Mucosa of descending colon (tissue), 3 donors: ENCODE measurements at regions of chr19 and their contacts with region 1.

Region 1: DNA sequence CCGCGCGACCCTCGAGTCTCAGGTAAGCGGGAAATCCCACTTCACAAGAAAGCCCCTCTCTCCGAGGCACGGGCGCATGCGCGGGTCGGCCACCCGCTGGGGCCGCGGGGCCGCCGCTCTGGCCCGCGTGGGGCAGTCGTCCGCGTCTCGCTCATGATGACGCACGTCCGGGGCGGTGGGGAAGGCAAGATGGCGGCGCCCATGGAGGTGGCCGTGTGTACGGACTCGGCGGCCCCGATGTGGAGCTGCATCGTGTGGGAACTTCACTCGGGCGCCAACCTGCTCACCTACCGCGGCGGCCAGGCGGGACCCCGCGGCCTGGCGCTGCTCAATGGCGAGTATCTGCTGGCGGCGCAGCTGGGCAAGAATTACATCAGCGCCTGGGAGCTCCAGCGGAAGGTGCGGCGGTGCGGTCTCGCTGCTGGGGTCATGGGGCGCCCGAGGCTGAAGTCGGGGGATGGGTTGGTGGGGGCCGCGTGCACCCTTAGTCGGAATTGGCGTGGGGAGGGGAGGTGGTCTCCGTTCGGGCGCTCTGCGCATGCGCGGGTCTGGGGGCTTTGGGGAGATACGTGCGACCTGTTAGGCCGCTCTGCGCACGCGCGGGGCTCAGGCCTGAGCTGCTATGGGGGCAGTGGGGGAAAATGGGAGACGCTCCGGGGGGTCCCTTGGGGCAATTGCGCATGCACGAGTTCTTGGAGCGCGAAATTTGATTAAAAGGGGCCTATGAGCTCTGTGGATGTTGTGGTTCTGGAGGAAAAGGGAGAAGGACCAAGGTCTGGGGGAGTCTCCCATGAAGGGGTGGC is at the start of gene WDR18:
- DNase-seq: peak; percentile 94 to 95 (median 94)
- ATAC-seq: peak; percentile 96
- H3K4me3 ChIP-seq: peak within 1 kb of the TSS; percentile 96
- H3K4me1 ChIP-seq: peaks cover 24% of the 10 kb centered on the region
- CTCF ChIP-seq: no peak
- total RNA-seq, gene WDR18: 23.8 to 42.0 (median 33.0) TPM

Region 2: GRCh38 chr19:850221-850978 is 134.0 kb before region 1 on chr19:
- intact Hi-C with region 1: loop called in 1 of 2 experiments (anchors 10 kb)
- DNase-seq: peak; percentile 75 to 86 (median 75)
- ATAC-seq: peak; percentile 84
- H3K4me3 ChIP-seq: no peak overlapping the region
- H3K4me1 ChIP-seq: peaks cover 3% of the 10 kb centered on the region
- CTCF ChIP-seq: no peak

Region 3: GRCh38 chr19:925526-926322 is 58.6 kb before region 1 on chr19 and contains the start of gene ARID3A:
- intact Hi-C with region 1: loop called (anchors 5 kb)
- DNase-seq: peak; percentile 72 to 87 (median 86)
- ATAC-seq: peak; percentile 85
- H3K4me3 ChIP-seq: peak within 1 kb of the TSS; percentile 74
- H3K4me1 ChIP-seq: peaks cover 10% of the 10 kb centered on the region
- CTCF ChIP-seq: no peak
- total RNA-seq, gene ARID3A: 10.1 to 16.0 (median 14.5) TPM